Transverse colon (tissue), 4 donors: ENCODE measurements at regions of chr11 and their contacts with region 1.

Region 1: DNA sequence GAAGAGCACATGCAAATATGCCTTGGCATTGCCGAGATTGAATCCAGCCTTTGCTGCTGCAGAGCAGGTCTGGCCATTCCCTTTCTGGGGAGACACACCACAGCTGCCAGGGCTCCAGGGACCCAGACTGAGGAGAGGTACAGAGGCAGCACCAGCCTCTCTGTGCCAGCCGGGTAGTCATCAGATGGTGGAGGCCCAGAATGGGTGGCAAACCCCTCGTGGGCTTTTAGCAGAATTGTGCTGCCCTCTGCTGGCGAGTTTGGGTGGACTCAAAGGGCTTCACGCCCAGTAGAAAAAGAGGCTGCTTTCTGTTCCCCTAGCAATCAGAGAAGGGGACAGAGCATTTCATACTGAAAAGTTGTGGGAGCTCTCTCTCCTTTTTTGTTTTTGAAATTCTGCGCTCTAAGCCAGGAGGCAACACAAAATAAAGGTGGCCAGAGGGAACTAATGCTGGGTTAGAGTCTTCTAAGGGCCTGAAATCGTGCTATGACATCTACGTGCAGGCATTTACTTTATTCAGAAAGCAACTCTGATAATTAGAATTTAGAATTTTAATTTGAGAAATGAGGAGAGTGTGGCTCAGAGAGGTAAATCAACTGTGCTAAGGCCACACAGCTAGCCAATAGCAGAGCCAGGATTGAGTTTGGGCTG is 158.8 kb upstream of the NAV2 start:
- DNase-seq: peak; percentile 88
- H3K4me3 ChIP-seq: no peak overlapping the region
- H3K27ac ChIP-seq: no peak overlapping the region
- H3K4me1 ChIP-seq: peaks cover 0 to 23% (median 3%) of the 10 kb centered on the region in 4 donors
- H3K27me3 ChIP-seq: no peaks in the 10 kb centered on the region
- CTCF ChIP-seq: peak; percentile 87 to 90 (median 88)
- EP300 ChIP-seq: no peak
- POLR2A ChIP-seq: no peak

Region 2: DNA sequence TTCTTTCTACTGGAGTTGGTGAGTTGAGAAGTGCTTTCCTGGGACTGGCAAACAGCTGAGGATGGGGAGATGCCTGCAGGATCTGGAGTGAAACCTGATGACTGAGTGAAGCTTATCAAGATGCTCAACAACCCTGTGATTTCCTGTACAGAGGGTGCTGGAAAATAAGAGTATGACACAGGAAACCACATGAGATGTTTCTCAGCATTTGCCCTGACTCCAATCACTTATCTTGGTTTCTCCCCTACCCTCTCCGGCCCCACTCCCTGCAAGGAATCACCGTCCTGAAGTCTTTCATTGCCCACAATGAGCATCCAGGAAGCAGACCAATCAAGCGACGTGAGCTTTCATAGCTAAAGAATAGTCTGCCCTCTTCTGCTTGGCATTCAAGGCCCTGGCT is 493.2 kb before region 1 on chr11 and contains the start of gene MRGPRX2:
- in situ Hi-C with region 1: loop called in 3 of 4 experiments (anchors 10 to 25 kb)
- intact Hi-C with region 1: loop called (anchors 10 kb)
- DNase-seq: no peak
- H3K4me3 ChIP-seq: no peak within 1 kb of the TSS
- H3K27ac ChIP-seq: no peak within 1 kb of the TSS
- H3K4me1 ChIP-seq: no peaks in the 10 kb centered on the region
- H3K27me3 ChIP-seq: no peaks in the 10 kb centered on the region
- CTCF ChIP-seq: no peak
- EP300 ChIP-seq: no peak
- POLR2A ChIP-seq: no peak
- total RNA-seq, gene MRGPRX2: not detected

Region 3: DNA sequence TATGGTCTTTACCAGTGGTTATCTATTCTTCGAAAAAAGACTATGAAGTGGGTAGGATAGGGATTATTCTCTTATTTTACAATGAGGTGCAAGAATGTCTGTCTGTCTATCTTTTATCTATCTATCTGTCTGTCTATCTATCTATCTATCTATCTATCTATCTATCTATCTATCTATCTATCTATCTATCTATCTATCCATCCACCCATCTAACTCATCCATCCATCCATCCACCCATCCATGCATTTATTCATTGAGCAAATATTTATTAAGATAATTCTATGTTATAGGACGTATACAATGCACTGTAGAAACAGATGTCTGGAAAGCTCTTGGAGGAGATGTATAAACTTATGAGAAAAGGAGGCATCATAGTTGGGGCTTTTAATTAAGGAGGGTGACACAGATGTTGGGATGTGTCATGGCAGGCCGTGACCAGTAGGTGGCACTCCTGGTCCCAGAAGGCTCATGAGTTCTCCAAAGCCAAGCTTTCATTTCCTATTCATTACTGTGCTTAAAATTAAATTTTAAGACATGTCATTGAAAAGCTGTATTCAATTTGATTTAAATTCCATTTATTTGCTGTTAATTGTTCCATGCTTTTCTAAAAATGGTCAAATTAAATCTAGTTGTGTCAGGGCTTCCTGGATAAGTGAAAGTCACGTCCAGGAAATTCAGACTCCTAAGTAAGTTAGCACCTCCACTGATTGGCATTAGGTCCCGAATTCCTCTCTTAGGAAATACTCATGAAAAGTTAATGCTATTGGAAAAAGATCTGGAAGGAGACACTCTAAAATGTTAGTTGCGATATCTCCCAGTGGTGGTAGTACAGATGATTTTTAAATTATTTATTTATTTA is 294.1 kb before region 1 on chr11:
- in situ Hi-C with region 1: no loop called
- intact Hi-C with region 1: loop called (anchors 5 kb)
- DNase-seq: peak; percentile 75
- H3K4me3 ChIP-seq: peak overlapping the region in 1 of 4 donors; percentile 19
- H3K27ac ChIP-seq: no peak overlapping the region
- H3K4me1 ChIP-seq: peaks cover 0 to 4% (median 0%) of the 10 kb centered on the region in 4 donors
- H3K27me3 ChIP-seq: no peaks in the 10 kb centered on the region
- CTCF ChIP-seq: peak; percentile 87 to 96 (median 92)
- EP300 ChIP-seq: no peak
- POLR2A ChIP-seq: no peak

Region 4: DNA sequence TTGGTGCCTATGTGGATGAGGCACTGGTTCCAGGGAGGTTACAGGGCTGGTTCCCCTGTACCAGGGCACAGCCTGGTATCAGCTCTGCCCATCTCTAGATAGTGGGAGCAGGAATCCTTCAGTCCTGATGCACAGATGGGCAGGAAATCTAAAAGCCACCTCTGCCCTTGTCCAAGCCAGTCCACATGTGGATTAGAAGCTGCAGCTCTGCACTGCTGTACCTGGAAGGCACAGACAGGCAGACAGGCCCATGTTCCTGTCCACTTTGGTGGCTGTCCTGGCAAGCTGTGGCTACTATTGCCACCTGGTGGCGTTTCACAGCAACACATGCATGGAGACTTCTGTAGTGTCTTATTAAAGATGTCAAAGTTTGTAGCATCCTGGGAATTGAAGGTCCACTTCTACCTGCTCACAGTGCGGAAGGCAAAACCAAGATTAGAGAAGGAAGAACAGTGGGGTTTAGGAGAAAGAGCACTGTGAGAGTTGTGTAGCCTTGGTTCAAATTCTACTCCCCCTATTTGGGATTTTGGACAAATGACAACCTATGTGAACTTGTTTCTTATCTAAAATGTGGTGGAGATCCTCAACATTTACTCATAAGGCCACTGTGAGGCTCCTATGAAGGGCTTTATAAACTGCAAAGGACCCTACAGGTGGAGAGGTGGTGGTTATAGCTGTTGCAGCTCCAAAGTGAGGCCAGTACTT is 188.9 kb after region 1 on chr11:
- in situ Hi-C with region 1: no loop called
- intact Hi-C with region 1: loop called (anchors 2 kb)
- DNase-seq: peak; percentile 83
- H3K4me3 ChIP-seq: no peak overlapping the region
- H3K27ac ChIP-seq: peak overlapping the region in 1 of 4 donors; percentile 50
- H3K4me1 ChIP-seq: peaks cover 0 to 9% (median 4%) of the 10 kb centered on the region in 4 donors
- H3K27me3 ChIP-seq: no peaks in the 10 kb centered on the region
- CTCF ChIP-seq: peak; percentile 85 to 93 (median 89)
- EP300 ChIP-seq: no peak
- POLR2A ChIP-seq: no peak

Region 5: DNA sequence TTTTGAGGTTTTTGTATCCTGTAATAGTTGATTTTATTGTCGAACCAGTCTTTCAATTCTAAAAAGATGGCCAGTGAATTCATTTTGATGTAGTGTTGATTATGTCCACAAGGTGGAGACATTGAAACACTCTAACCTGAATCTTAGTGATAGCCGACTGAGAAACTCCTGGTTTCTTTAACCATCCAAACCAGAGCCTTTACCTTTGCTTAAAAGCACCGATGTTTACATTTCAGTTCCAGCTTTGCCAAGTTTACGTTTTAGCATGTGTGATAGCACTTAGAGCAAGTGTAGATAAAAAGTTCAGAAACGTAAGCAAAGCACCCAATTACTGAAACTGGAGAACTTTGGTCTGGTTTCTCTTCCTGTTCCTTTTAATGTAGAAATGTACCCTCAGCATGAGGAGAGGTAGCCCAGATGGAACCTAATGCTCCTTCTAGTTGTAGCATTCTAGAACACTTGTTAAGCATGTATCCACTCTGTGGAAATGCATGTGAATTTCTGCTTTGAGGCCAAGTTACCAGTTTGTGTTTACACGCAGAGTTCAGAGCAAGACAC is 397.8 kb after region 1 on chr11:
- in situ Hi-C with region 1: no loop called
- intact Hi-C with region 1: no loop called
- DNase-seq: no peak
- H3K4me3 ChIP-seq: no peak overlapping the region
- H3K27ac ChIP-seq: no peak overlapping the region
- H3K4me1 ChIP-seq: peaks cover 6 to 26% (median 12%) of the 10 kb centered on the region in 4 donors
- H3K27me3 ChIP-seq: no peaks in the 10 kb centered on the region
- CTCF ChIP-seq: peak; percentile 67 to 79 (median 73)
- EP300 ChIP-seq: no peak
- POLR2A ChIP-seq: no peak

Region 6: GRCh38 chr11:20097319-20098221 is 543.8 kb after region 1 on chr11:
- in situ Hi-C with region 1: loop called in 1 of 4 experiments (anchors 25 kb)
- intact Hi-C with region 1: no loop called
- DNase-seq: no peak
- H3K4me3 ChIP-seq: no peak overlapping the region
- H3K27ac ChIP-seq: peak overlapping the region; percentile 29 to 50 (median 36)
- H3K4me1 ChIP-seq: peaks cover 0 to 5% (median 2%) of the 10 kb centered on the region in 4 donors
- H3K27me3 ChIP-seq: no peaks in the 10 kb centered on the region
- CTCF ChIP-seq: no peak
- EP300 ChIP-seq: no peak
- POLR2A ChIP-seq: no peak

Region 7: DNA sequence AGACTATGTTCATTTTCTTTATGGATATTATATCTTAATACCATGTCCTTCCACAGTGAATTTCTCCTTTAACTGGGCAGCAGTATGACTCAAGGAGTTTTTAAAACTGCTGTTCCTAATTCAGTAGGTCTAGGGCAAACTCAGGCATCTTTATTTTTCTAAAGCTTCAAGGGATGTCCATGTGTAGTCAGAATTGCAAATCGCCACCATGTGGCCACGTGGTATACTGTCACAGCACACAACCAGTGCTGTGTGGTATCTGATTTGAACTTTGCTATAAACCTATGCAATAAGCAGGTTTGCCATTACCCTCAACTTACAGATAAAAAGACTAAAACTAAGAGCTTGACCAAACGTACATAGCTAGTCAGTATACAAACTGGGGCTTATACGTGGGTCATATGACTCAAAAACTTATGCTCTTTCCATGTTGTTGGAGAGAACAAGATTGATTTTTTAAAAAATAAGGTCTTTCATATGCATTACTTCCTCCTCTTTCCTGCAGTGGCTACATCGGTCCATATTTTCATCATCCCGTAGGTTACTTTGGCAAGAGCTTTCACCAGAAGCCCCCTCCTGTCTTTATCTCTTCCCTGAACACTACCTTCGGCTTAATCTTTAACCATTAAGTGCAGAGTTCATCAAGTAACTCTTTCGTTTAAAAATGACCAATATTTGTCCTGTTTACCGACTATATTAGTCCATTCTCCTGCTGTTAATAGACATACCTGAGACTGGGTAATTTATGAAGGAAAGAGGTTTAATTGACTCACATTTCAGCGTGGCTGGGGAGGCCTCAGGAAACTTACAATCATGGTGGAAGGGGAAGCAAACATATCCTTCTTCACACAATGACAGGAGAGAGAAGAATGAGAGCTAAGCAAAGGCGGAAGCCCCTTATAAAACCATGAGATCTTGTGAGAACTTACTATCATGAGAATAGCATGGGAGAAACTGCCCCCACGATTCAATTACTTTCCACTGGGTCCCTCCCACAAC is 801.7 kb after region 1 on chr11:
- in situ Hi-C with region 1: loop called in 1 of 4 experiments (anchors 25 kb)
- intact Hi-C with region 1: no loop called
- DNase-seq: peak; percentile 51
- H3K4me3 ChIP-seq: no peak overlapping the region
- H3K27ac ChIP-seq: no peak overlapping the region
- H3K4me1 ChIP-seq: peaks cover 0 to 24% (median 9%) of the 10 kb centered on the region in 4 donors
- H3K27me3 ChIP-seq: no peaks in the 10 kb centered on the region
- CTCF ChIP-seq: peak; percentile 51 to 55 (median 55)
- EP300 ChIP-seq: no peak
- POLR2A ChIP-seq: no peak